ENCODE measurements at regions of chr6 and their contacts with region 1.

Region 1: DNA sequence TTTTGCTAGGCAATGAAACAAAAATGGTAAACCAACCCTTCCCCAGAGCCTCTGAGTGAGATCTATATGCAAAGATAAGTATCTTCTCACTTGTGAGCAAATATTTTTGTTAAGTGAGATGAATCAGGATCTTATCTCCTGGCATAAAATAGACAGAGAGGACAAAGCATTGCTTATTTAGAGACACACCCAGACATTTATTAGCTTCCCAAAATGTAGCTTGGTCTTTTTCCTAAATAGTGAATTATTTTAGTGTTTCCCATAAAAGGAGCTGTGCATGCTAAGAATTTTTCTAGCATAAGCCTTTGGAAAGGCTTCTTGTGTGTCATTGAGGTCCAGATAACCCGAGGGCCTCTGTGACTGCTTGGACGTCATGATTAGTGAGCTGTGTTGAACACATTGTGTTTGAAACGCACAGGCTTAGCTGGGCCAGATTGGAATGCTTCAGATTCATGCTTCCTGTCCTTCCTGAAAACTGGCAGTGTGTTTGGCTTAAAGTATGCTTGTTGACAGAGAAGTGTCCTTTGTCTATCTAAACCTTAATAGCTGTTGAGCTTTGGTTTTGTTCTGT is 16.5 kb downstream of the MTHFD1L start:
- DNase-seq: peak in 2 of 4 donors; percentile 13 to 34
- ATAC-seq: peak; percentile 70
- H3K4me3 ChIP-seq: no peak overlapping the region
- H3K27ac ChIP-seq: no peak overlapping the region
- H3K4me1 ChIP-seq: peaks cover 2% of the 10 kb centered on the region
- H3K27me3 ChIP-seq: no peaks in the 10 kb centered on the region
- CTCF ChIP-seq: no peak
- POLR2A ChIP-seq: no peak

Region 2: DNA sequence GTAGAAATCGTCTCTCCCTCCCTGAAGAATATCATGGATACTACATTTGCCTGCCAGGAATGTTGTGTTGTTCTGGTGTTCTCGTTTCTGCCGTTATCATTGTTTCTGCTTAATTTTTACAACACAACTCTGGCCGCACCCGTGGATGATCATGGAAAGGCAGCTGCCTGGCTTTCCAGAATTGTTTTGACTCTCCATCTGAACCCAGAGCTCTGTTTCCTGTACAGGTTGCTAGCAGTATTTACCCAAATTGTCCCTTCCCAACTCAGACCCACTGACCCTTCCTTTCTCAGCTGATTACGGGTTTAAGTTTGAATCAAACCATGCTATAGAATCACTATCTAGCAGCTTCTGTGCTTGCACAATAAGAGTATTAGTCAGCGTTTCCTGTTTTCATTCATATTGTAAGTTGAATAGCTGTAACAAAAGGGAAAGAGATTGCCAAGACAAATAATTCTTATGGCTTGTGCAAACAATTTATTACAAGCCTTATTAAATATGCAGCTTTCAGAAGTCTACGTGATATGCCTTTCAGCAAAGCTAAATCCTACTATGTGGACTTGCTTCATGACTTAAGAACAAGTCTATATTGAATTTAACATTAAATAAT is 122.5 kb after region 1 on chr6:
- intact Hi-C with region 1: loop called (anchors 10 kb)
- DNase-seq: no peak
- ATAC-seq: peak; percentile 86
- H3K4me3 ChIP-seq: no peak overlapping the region
- H3K27ac ChIP-seq: peak overlapping the region; percentile 28 to 82 (median 34)
- H3K4me1 ChIP-seq: peaks cover 12% of the 10 kb centered on the region
- H3K27me3 ChIP-seq: no peaks in the 10 kb centered on the region
- CTCF ChIP-seq: no peak
- POLR2A ChIP-seq: no peak

Region 3: DNA sequence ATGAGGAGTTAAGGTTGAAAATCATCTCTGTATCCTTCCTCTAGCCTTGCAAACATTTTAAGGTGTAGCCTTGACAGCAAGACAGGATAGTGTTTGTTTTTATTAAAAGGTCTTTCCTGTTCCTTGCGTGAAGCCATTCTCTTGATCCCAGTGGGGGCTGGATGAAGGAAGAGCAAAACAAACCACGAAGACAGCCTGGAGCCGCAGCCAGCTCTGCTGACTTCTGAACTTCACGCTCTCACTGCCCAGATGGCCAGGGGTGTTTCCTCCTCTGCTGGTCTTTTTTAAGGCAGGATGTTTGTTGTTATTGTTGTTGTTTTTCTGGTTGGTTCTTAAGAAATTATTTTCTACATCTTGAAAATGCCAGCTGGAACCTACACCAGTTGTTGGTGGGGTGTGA is 139.9 kb after region 1 on chr6:
- intact Hi-C with region 1: no loop called
- DNase-seq: no peak
- ATAC-seq: no peak
- H3K4me3 ChIP-seq: no peak overlapping the region
- H3K27ac ChIP-seq: no peak overlapping the region
- H3K4me1 ChIP-seq: peaks cover 30% of the 10 kb centered on the region
- H3K27me3 ChIP-seq: no peaks in the 10 kb centered on the region
- CTCF ChIP-seq: no peak
- POLR2A ChIP-seq: no peak

Region 4: GRCh38 chr6:151553416-151554165 is 671.6 kb after region 1 on chr6:
- intact Hi-C with region 1: no loop called
- DNase-seq: no peak
- ATAC-seq: no peak
- H3K4me3 ChIP-seq: no peak overlapping the region
- H3K27ac ChIP-seq: no peak overlapping the region
- H3K4me1 ChIP-seq: no peaks in the 10 kb centered on the region
- H3K27me3 ChIP-seq: no peaks in the 10 kb centered on the region
- CTCF ChIP-seq: no peak
- POLR2A ChIP-seq: no peak

Measured in body of pancreas (tissue), 4 donors.